Left cardiac atrium (tissue), 4 donors: ENCODE measurements at regions of chr1 and their contacts with region 1.

Region 1: GRCh38 chr1:66929999-66930822 is 5.4 kb downstream of the MIER1 start:
- DNase-seq: peak; percentile 95
- ATAC-seq: peak; percentile 88 to 92

Region 2: DNA sequence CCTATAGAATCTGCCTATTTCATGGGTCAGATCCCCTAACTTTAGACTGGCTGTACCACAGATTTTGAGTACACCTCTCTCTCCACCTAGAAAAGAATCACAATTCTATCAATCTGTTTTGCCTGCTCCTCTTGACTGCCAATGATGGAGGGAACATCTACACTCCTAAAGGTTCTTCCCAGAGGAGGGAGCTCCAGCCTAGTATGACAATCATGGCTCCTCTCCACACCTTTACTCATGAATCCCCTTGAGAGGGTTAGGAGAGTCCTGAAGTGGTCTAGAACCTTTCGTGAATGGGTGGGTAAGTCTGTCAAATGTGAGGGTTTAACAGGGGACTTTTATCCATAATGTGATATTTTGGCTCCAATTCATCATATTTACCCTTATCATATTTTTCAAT is 53.5 kb before region 1 on chr1:
- intact Hi-C with region 1: no loop called
- DNase-seq: no peak
- ATAC-seq: no peak

Region 3: GRCh38 chr1:66968574-66968973 is 38.4 kb after region 1 on chr1:
- intact Hi-C with region 1: no loop called
- DNase-seq: no peak
- ATAC-seq: no peak

Region 4: DNA sequence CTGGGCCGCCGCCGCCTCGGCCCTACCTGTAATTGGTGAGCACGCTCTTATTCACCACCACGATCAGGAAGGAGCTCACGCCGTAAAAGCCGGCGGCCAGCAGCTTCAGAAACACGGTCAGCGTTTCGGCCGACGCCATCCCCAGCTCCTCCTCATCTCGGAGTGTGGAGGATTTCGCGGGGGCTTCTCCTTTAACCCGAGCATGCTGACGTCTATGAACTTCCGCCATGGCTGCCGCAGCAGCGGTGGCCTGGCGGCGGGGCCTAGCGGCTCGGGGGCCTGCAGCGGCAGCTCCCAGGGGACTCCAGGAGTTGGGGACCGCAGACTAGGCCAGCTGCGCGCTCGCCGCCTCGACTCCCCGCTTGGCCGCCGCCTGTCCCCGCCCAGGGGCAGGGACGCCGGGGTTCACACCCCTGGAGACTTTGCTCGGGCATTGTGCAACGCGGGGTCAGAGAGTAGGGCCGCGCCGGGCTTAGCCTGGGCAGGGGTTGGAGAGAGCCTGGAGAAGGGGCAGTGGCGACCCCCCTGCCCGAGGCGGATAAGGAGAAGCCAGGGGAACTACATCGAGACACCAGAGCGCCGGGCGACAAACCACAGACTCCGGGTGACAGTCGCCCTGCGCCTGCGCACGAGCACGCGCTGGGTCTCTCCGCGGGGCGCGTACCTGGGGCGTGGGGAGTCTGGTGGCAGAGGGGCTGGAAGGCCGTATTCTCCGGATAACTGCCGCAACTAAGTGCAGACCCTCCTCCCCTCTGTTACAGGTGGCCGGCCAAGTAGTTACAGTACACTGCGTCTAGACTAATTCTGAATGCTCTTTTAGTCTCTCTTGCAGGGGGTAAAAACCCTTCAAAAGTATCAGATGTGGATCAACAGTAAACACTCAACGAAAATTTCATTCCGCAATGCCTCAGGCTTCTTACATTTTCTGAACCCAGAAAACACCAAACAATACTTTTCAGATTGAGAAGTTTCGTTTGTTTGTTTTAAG is 123.9 kb after region 1 on chr1 and contains the start of gene SLC35D1:
- intact Hi-C with region 1: loop called in 1 of 2 experiments (anchors 5 kb)
- DNase-seq: peak; percentile 76
- ATAC-seq: peak; percentile 86
- total RNA-seq, gene SLC35D1: 2.6 to 4.5 TPM